CD4-positive, alpha-beta memory T cell (primary cell): ENCODE measurements at regions of chr7 and their contacts with region 1.

Region 1: DNA sequence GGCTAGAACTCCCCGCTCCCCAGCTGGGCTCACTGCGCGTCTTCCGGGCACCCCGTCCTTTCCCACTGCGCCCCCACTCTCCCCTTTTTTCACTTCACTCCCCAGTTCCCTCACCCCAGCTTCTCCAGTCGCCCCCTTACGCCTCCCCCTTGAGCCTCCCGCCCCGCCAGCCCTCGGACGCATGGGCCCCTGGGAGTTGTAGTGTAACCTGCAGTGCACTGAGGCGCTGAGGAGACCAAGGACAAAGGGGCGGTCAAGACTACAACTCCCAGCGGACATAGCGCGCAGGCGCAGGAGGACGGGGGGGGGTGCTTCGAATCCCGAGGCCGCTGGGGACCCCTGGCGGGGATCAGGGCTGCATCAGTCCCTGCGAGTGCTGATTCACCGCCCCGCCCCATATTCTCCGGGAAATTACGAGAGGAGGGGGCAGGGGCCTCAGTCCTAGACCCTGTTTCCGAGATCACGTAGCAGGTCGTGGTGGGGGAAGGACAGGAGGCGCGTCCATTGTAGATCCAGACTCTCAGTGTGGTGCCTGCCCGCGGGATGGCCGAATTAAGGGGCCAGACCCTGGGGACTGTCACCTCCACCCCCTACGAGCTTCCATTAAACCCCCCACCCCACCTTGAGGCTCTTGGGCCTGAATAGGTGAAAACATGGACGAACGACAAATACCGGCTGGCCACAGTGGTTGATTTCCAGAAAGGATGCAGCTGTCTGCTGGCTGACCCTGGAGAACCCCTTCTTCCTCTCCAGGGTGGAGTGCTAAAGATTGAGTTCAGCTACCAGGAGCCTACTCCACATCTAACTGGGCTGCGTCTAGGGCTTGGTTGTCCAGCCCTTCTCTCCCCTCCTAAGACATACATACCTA is 554 bp upstream of the YWHAG start:
- DNase-seq: peak; percentile 95 to 97 (median 96)
- H3K4me3 ChIP-seq: peak overlapping the region; percentile 14 to 51
- H3K4me3 Mint-ChIP-seq: peak overlapping the region; percentile 86 to 99 (median 92)
- H3K27ac ChIP-seq: peak overlapping the region; percentile 94
- H3K27ac Mint-ChIP-seq: peak overlapping the region; percentile 91 to 98 (median 97)
- H3K4me1 ChIP-seq: peaks cover 43% of the 10 kb centered on the region
- H3K4me1 Mint-ChIP-seq: peaks cover 29 to 51% (median 39%) of the 10 kb centered on the region in 4 donors
- H3K27me3 ChIP-seq: no peaks in the 10 kb centered on the region
- H3K27me3 Mint-ChIP-seq: no peaks in the 10 kb centered on the region

Region 2: DNA sequence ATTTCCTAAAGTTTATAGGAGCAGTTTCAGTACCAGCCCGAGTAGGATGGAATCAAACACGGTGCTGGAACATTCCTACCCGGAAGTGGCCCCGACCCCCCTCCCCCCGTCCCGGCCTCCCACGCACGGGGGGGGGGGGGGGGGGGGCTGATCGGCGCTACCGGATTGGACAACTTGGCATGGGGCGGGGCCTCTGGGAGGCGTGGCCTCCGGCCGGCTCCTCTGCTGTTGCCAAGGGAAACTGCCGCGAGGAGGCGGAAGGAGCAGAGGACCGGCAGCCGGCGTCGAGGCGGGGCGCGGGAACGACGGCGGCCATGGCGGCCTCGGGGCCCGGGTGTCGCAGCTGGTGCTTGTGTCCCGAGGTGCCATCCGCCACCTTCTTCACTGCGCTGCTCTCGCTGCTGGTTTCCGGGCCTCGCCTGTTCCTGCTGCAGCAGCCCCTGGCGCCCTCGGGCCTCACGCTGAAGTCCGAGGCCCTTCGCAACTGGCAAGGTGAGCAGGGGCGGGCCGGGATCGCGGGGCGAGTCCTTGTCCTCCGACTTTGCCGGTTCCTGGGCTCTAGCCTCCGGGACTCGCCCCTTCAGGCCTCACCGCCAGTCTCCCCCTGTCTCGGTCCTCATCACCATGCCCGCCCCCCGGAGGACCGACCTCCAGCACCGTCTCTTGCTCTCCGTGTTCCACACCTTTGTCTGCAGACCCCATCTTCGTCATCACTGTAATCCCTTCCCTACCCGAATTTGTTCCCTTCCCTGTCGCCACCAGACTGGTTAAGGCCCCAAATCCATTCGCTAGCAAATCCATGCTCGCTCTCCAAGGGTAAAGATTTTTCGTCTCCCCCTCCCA is 480.4 kb before region 1 on chr7 and contains the start of gene RHBDD2:
- CTCF ChIA-PET with region 1: no interaction called
- POLR2A ChIA-PET with region 1: no interaction called
- intact Hi-C with region 1: loop called (anchors 1 kb)
- DNase-seq: peak; percentile 90 to 96 (median 93)
- H3K4me3 ChIP-seq: peak within 1 kb of the TSS; percentile 89 to 94
- H3K4me3 Mint-ChIP-seq: peak within 1 kb of the TSS; percentile 91 to 99 (median 98)
- H3K27ac ChIP-seq: peak within 1 kb of the TSS; percentile 91
- H3K27ac Mint-ChIP-seq: peak within 1 kb of the TSS; percentile 96 to 100 (median 98)
- H3K4me1 ChIP-seq: peaks cover 25% of the 10 kb centered on the region
- H3K4me1 Mint-ChIP-seq: peaks cover 23 to 39% (median 32%) of the 10 kb centered on the region in 4 donors
- H3K27me3 ChIP-seq: no peaks in the 10 kb centered on the region
- H3K27me3 Mint-ChIP-seq: no peaks in the 10 kb centered on the region
- total RNA-seq, gene RHBDD2: 47.1 to 53.2 TPM

Region 3: DNA sequence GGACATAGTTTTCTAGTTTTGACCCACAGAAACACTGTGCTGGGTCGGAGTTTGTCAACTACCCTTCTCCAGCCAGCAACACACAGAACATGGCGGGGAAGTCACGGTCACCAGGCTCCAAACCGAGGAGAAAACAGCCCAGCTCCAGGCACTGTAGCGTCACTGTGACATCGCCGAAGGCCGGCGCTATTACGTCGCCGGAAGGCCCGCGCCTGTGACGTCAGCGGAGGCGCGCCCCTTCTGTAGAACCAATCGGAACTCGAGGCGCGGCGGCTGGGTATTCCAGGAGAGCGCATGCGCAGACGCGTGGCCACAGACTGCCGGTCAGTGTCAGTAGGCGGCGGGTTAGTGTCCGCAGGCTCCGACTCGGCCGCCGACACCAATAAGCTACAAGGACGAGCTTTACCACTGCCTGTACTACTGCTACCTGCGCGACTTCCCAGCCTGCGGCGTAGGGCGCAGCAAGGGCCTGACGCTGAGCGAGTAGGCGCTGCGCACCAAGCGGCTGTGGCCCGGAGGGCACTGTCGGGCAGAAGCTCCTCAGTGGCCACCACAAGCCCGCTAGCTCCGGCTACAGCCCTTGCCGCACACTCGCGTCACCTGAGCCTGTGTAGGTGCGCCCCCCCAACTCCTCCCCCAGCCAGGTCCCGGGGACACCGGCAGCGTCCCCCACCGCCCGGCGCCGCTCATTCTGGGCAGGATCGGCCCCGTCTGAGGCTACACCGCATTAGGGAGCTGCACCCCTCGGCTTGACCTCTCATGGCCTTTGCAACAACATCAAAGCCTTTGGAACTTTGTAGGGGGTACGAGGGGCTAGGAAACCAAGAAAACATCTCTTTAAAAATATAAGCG is 192.7 kb before region 1 on chr7:
- CTCF ChIA-PET with region 1: no interaction called
- POLR2A ChIA-PET with region 1: interaction called, 4 read pairs
- intact Hi-C with region 1: loop called (anchors 1 kb)
- DNase-seq: peak; percentile 88 to 92 (median 92)
- H3K4me3 ChIP-seq: peak overlapping the region; percentile 47 to 75
- H3K4me3 Mint-ChIP-seq: peak overlapping the region; percentile 87 to 93 (median 90)
- H3K27ac ChIP-seq: peak overlapping the region; percentile 66
- H3K27ac Mint-ChIP-seq: peak overlapping the region; percentile 90 to 97 (median 95)
- H3K4me1 ChIP-seq: peaks cover 6% of the 10 kb centered on the region
- H3K4me1 Mint-ChIP-seq: peaks cover 2 to 8% (median 5%) of the 10 kb centered on the region in 4 donors
- H3K27me3 ChIP-seq: no peaks in the 10 kb centered on the region
- H3K27me3 Mint-ChIP-seq: no peaks in the 10 kb centered on the region

Region 4: GRCh38 chr7:76291343-76292212 is 67.8 kb before region 1 on chr7:
- CTCF ChIA-PET with region 1: interaction called, 13 read pairs
- POLR2A ChIA-PET with region 1: interaction called, 3 read pairs
- intact Hi-C with region 1: loop called (anchors 1 kb)
- DNase-seq: peak; percentile 73 to 84 (median 79)
- H3K4me3 ChIP-seq: no peak overlapping the region
- H3K4me3 Mint-ChIP-seq: no peak overlapping the region
- H3K27ac ChIP-seq: no peak overlapping the region
- H3K27ac Mint-ChIP-seq: peak overlapping the region in 2 of 7 donors; percentile 34 to 72
- H3K4me1 ChIP-seq: peaks cover 7% of the 10 kb centered on the region
- H3K4me1 Mint-ChIP-seq: peaks cover 3 to 9% (median 6%) of the 10 kb centered on the region in 4 donors
- H3K27me3 ChIP-seq: no peaks in the 10 kb centered on the region
- H3K27me3 Mint-ChIP-seq: no peaks in the 10 kb centered on the region

Region 5: GRCh38 chr7:76314042-76314721 is 45.2 kb before region 1 on chr7:
- CTCF ChIA-PET with region 1: interaction called, 40 read pairs
- POLR2A ChIA-PET with region 1: interaction called, 128 read pairs
- intact Hi-C with region 1: loop called (anchors 1 kb)
- DNase-seq: peak; percentile 92 to 94 (median 93)
- H3K4me3 ChIP-seq: no peak overlapping the region
- H3K4me3 Mint-ChIP-seq: peak overlapping the region in 4 of 8 donors; percentile 32 to 72 (median 54)
- H3K27ac ChIP-seq: no peak overlapping the region
- H3K27ac Mint-ChIP-seq: peak overlapping the region in 3 of 7 donors; percentile 41 to 86 (median 77)
- H3K4me1 ChIP-seq: peaks cover 20% of the 10 kb centered on the region
- H3K4me1 Mint-ChIP-seq: peaks cover 15 to 30% (median 21%) of the 10 kb centered on the region in 4 donors
- H3K27me3 ChIP-seq: no peaks in the 10 kb centered on the region
- H3K27me3 Mint-ChIP-seq: no peaks in the 10 kb centered on the region

Region 6: DNA sequence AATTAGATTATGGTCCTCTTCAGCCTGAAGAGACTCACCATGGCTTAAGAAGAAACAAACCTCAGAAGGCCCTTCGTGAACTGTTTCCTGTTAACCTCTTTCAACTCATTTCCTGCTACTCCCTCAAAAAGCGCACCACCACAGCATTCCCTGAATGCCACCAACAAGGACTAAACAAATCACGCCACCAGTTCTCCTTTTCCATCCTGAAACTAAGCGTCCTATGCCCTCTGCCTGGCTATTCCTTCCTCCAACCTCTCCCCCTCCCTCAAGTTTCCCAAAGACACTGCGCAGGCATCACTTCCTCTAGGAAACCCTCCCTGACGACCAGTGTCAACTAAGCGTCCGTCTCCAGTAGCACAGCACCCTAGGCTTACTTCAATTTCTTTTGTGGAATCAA is 12.6 kb before region 1 on chr7:
- CTCF ChIA-PET with region 1: interaction called, 6 read pairs
- POLR2A ChIA-PET with region 1: interaction called, 5 read pairs
- intact Hi-C with region 1: loop called (anchors 1 kb)
- DNase-seq: no peak
- H3K4me3 ChIP-seq: no peak overlapping the region
- H3K4me3 Mint-ChIP-seq: peak overlapping the region; percentile 4 to 73 (median 54)
- H3K27ac ChIP-seq: peak overlapping the region; percentile 16
- H3K27ac Mint-ChIP-seq: peak overlapping the region; percentile 28 to 93 (median 76)
- H3K4me1 ChIP-seq: peaks cover 42% of the 10 kb centered on the region
- H3K4me1 Mint-ChIP-seq: peaks cover 55 to 80% (median 69%) of the 10 kb centered on the region in 4 donors
- H3K27me3 ChIP-seq: no peaks in the 10 kb centered on the region
- H3K27me3 Mint-ChIP-seq: no peaks in the 10 kb centered on the region

Region 7: GRCh38 chr7:76403780-76404494 is 44.6 kb after region 1 on chr7:
- CTCF ChIA-PET with region 1: no interaction called
- POLR2A ChIA-PET with region 1: no interaction called
- intact Hi-C with region 1: no loop called
- DNase-seq: no peak
- H3K4me3 ChIP-seq: no peak overlapping the region
- H3K4me3 Mint-ChIP-seq: no peak overlapping the region
- H3K27ac ChIP-seq: no peak overlapping the region
- H3K27ac Mint-ChIP-seq: peak overlapping the region in 1 of 7 donors; percentile 46
- H3K4me1 ChIP-seq: no peaks in the 10 kb centered on the region
- H3K4me1 Mint-ChIP-seq: peaks cover 0 to 3% (median 0%) of the 10 kb centered on the region in 4 donors
- H3K27me3 ChIP-seq: no peaks in the 10 kb centered on the region
- H3K27me3 Mint-ChIP-seq: no peaks in the 10 kb centered on the region